OCI-LY7 (cell line): ENCODE measurements at regions of chr3 and their contacts with region 1.

Region 1: GRCh38 chr3:135922903-135923250 is 42.7 kb upstream of the PPP2R3A start:
- DNase-seq: no peak
- H3K4me3 ChIP-seq: no peak overlapping the region
- H3K27ac ChIP-seq: no peak overlapping the region
- H3K4me1 ChIP-seq: no peaks in the 10 kb centered on the region
- CTCF ChIP-seq: no peak

Region 2: DNA sequence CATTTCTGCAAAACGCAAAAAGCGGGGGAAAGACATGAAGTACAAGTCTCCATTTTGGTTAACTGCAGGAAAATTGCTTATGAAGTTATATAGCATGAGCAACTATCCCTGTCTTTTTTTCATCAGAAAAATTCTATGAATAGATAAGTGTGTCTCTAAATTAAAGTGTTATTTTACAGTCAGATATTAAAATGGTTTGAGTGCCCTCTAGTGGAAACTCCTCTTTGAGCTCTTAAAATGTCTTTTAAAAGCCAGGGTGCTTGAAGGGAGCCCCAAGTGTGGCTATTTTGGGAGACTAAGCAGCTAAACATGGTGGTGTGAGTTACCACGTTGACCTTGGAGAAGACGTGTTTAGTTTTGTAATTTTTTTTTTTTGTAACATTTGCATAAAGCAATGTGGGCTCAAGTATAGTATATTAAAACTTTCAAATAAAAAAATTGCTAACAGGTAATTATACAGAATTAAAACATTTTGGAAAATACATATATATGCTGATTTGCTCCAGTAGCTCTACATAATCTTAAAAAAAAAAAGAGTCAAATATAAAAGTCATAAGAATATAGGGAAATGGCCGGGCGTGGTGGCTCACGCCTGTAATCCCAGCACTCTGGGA is 119.8 kb after region 1 on chr3:
- CTCF ChIA-PET with region 1: no interaction called
- POLR2A ChIA-PET with region 1: interaction called, 3 read pairs
- intact Hi-C with region 1: loop called (anchors 5 kb)
- DNase-seq: peak; percentile 52
- H3K4me3 ChIP-seq: no peak overlapping the region
- H3K27ac ChIP-seq: no peak overlapping the region
- H3K4me1 ChIP-seq: no peaks in the 10 kb centered on the region
- CTCF ChIP-seq: peak; percentile 90